ENCODE measurements at regions of chr11 and their contacts with region 1.

Region 1: GRCh38 chr11:57940044-57940756 is 83.5 kb upstream of the OR9Q1 start:
- DNase-seq: peak; percentile 40
- H3K4me3 ChIP-seq: no peak overlapping the region
- H3K27ac ChIP-seq: no peak overlapping the region
- H3K4me1 ChIP-seq: peaks cover 2% of the 10 kb centered on the region
- H3K27me3 ChIP-seq: no peaks in the 10 kb centered on the region
- CTCF ChIP-seq: no peak

Region 2: DNA sequence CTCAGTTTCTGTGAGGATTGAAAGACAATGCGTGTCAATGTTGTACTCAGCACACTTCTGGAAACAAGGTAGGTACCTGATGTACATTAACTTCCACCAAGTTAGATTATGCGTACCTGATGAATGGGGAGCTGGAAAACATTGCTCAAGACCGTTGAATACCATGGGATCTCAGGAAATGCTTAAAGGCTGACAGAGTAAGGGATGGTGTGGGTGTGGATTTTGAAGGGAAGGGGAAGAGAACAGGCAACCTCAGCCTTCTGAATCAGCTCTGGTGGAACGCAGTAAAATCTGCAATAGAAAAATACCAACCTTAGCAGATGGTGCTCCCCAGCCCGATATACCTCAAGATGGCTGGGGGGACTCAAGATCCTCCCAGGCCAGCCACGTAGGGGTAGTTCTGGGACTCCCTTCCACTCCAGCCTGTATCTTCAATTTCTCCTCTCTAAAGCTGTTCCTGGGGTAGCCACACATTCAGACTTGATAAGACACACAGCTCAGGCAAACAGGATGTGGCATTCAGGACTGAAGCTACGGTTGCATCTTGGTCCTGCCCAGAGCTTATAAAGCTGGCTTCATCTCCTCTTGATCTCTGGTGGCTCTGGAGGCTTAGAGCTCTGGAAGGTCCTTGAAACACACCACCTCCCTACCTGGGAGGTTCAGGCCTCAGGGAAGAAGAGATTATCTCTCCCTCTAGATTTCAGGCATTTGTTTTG is 66.8 kb before region 1 on chr11:
- CTCF ChIA-PET with region 1: no interaction called
- dilution Hi-C with region 1: loop called (anchors 5 kb)
- in situ Hi-C with region 1: no loop called
- intact Hi-C with region 1: no loop called
- DNase-seq: peak; percentile 70
- H3K4me3 ChIP-seq: no peak overlapping the region
- H3K27ac ChIP-seq: peak overlapping the region; percentile 20
- H3K4me1 ChIP-seq: peaks cover 8% of the 10 kb centered on the region
- H3K27me3 ChIP-seq: no peaks in the 10 kb centered on the region
- CTCF ChIP-seq: no peak